SK-N-SH (cell line): ENCODE measurements at regions of chr10 and their contacts with region 1.

Region 1: DNA sequence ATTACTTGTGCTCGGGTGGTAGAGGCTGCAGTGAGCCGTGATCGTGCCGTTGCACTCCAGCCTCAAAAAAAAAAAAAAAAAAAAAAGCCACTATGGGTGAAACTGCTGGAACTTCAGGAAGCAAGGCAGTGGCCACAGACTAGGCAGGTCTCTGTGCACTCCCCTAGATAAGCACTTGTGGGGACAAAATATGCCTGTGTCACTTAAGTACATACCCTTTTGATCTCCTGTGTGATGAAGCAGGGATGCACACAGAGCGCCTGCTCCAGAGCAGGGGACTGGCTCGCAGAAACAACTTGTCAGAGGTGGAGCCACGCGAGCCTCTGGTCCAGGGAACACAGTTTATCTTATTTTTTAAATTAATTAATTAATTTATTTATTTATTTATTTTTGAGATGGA is 42.9 kb upstream of the PSAP start:
- DNase-seq: no peak
- H3K4me3 ChIP-seq: no peak overlapping the region
- H3K27ac ChIP-seq: no peak overlapping the region
- H3K4me1 ChIP-seq: peaks cover 0 to 3% of the 10 kb centered on the region in 2 experiments; a peak in 1 of 4 replicates
- H3K27me3 ChIP-seq: no peaks in the 10 kb centered on the region
- CTCF ChIP-seq: no peak
- EP300 ChIP-seq: no peak
- RAD21 ChIP-seq: no peak

Region 2: GRCh38 chr10:71323407-71323806 is 570.5 kb before region 1 on chr10:
- CTCF ChIA-PET with region 1: no interaction called
- POLR2A ChIA-PET with region 1: no interaction called
- DNase-seq: peak; percentile 54
- H3K4me3 ChIP-seq: no peak overlapping the region
- H3K27ac ChIP-seq: no peak overlapping the region
- H3K4me1 ChIP-seq: peaks cover 0 to 13% of the 10 kb centered on the region in 2 experiments; a peak in 1 of 4 replicates
- H3K27me3 ChIP-seq: no peaks in the 10 kb centered on the region
- CTCF ChIP-seq: no peak
- EP300 ChIP-seq: no peak
- RAD21 ChIP-seq: no peak

Region 3: DNA sequence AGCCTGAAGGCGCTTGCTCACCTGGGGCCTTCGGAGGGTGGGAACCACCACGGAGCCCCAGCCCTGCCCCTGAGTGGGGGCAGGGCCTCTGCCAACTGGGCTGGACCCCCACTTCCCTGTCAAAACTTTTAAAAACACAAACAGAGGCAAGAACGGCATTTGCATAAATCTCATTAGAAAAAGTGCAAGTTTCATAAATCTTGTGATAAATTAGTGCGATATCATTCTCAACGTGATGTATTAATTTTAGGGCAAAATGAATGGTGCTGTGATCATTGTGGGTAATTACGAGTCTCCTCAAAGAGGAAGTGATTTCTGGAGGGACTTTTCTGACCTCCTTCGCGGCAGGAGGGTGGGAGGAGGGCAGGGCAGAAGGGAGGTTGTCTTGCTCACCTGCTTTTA is 398.9 kb before region 1 on chr10:
- CTCF ChIA-PET with region 1: no interaction called
- POLR2A ChIA-PET with region 1: no interaction called
- DNase-seq: no peak
- H3K4me3 ChIP-seq: no peak overlapping the region
- H3K27ac ChIP-seq: no peak overlapping the region
- H3K4me1 ChIP-seq: peaks cover 0 to 13% of the 10 kb centered on the region in 2 experiments; a peak in 2 of 4 replicates
- H3K27me3 ChIP-seq: no peaks in the 10 kb centered on the region; the same call in none of the 2 replicates
- CTCF ChIP-seq: no peak
- EP300 ChIP-seq: no peak
- RAD21 ChIP-seq: no peak

Region 4: DNA sequence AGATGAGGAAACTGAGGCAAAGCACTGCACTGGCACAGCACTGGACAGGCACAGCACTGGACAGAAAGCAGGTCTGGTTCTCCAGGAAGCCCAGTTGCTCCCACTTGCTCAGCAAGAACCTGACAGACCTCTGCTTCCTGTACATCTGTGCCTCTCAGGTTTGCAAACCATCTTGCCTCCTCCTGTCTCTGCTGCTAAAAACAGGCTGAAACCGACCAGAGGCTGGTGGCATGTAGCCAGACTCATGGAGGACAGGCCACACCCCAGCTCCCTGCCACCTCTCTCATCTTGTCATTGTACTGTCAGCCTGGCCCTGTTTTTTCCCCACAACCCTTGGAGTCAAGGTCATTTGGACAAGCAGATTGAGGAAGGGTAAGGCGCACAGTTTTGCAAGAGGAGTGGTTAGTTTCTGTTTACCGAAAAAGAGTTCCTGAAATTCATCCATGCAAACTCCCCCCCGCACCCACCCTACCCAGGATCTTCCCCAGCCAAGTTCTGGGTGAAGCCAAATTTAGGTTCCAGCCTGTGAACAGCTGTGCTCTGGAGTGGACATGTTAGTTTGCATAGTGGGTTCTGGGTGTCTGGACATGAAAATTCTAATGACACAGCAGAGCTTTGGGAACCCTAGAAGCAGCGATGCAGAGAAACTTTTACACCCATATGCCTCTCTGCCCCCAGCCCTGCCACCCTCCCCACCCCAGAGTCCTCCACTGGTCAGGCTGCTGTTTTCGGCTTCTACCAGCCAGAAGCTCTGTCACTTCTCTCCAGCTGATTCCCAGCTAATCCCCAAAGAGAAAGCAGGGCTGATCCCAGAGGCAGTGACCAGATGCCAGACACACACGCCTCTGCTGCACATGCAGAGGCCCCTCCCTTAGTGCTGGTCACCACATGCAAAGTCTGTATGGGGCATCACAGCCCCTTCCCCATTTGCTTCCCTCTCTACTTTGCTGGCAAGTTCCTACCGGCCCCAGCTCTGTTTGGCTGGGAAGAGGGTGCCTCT is 165.9 kb before region 1 on chr10:
- CTCF ChIA-PET with region 1: interaction called, 31 read pairs
- POLR2A ChIA-PET with region 1: no interaction called
- DNase-seq: peak; percentile 87
- H3K4me3 ChIP-seq: no peak overlapping the region
- H3K27ac ChIP-seq: peak overlapping the region in 1 of 2 experiments; percentile 91; a peak in 2 of 4 replicates
- H3K4me1 ChIP-seq: peaks cover 0 to 46% of the 10 kb centered on the region in 2 experiments; a peak in 1 of 4 replicates
- H3K27me3 ChIP-seq: no peaks in the 10 kb centered on the region; the same call in 1 of the 2 replicates
- CTCF ChIP-seq: no peak
- EP300 ChIP-seq: peak in 1 of 2 experiments; percentile 39; a peak in 1 of 4 replicates
- RAD21 ChIP-seq: no peak

Region 5: DNA sequence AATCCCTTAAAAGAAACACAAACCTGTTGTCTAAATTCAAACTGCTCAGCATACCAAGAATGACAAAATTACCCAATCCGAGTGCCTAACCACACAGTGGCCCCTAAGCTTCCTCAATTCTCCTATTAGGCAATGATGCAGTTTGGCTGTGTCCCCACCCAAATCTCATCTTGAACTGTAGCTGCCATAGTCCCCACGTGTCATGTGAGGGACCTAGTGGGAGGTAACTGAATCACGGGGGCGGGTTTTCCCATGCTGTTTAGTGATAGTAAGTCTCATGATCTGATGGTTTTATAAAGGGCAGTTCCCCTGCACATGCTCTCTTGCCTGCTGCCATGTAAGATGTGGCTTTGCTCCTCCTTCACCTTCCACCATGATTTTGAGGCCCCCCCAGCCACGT is 64.7 kb before region 1 on chr10:
- CTCF ChIA-PET with region 1: interaction called, 65 read pairs
- POLR2A ChIA-PET with region 1: no interaction called
- DNase-seq: no peak
- H3K4me3 ChIP-seq: no peak overlapping the region
- H3K27ac ChIP-seq: no peak overlapping the region
- H3K4me1 ChIP-seq: no peaks in the 10 kb centered on the region; a peak in 1 of 4 replicates
- H3K27me3 ChIP-seq: no peaks in the 10 kb centered on the region
- CTCF ChIP-seq: no peak
- EP300 ChIP-seq: no peak
- RAD21 ChIP-seq: no peak

Region 6: GRCh38 chr10:71880425-71881306 is 13.3 kb before region 1 on chr10:
- CTCF ChIA-PET with region 1: interaction called, 32 read pairs
- POLR2A ChIA-PET with region 1: no interaction called
- DNase-seq: peak; percentile 83
- H3K4me3 ChIP-seq: no peak overlapping the region; a peak in 1 of 4 replicates
- H3K27ac ChIP-seq: peak overlapping the region in 1 of 2 experiments; percentile 93; a peak in 2 of 4 replicates
- H3K4me1 ChIP-seq: peaks cover 0 to 24% of the 10 kb centered on the region in 2 experiments; a peak in 2 of 4 replicates
- H3K27me3 ChIP-seq: no peaks in the 10 kb centered on the region
- CTCF ChIP-seq: no peak
- EP300 ChIP-seq: peak in 1 of 2 experiments; percentile 88; a peak in 2 of 4 replicates
- RAD21 ChIP-seq: no peak

Region 7: DNA sequence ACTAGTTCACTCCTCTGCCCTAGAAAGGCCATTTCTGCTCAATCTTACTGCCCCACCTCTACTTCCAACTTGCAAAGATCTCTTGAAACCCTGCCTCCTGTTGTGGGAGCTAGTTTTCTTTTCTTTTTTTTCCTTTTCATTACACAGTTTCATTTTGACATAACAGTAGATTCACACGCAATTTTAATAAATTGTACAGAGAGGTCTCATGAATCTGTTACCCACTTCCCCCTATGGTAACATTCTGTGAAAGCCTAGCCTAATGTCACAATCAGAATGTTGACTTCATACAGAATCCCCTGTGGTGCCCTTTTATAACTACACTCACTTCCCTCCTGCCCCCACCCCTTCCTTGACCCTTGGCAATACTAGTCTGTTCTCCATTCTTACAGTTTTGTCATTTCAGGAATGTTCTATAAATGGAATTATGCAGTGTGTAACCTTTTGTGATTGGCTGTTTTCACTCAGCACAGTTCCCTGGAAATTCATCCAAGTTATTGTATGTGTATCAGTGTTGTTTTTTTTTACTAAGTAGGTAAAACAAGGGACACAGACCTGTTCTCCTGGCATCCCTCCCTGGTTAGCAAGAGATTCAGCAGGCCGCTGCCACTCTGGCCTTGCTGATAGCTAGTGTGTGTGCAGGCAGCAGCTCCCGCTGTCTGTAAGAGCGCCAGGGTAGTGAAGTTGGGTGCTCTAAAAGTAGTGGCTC is 91.8 kb after region 1 on chr10:
- CTCF ChIA-PET with region 1: interaction called, 10 read pairs
- POLR2A ChIA-PET with region 1: no interaction called
- DNase-seq: no peak
- H3K4me3 ChIP-seq: no peak overlapping the region
- H3K27ac ChIP-seq: peak overlapping the region; percentile 25 to 70; a peak in 3 of 4 replicates
- H3K4me1 ChIP-seq: peaks cover 11 to 39% of the 10 kb centered on the region in 2 experiments; a peak in 2 of 4 replicates
- H3K27me3 ChIP-seq: no peaks in the 10 kb centered on the region
- CTCF ChIP-seq: no peak
- EP300 ChIP-seq: no peak
- RAD21 ChIP-seq: no peak

Region 8: GRCh38 chr10:72061491-72061890 is 167.6 kb after region 1 on chr10:
- CTCF ChIA-PET with region 1: interaction called, 12 read pairs
- POLR2A ChIA-PET with region 1: no interaction called
- DNase-seq: peak; percentile 56
- H3K4me3 ChIP-seq: no peak overlapping the region
- H3K27ac ChIP-seq: no peak overlapping the region
- H3K4me1 ChIP-seq: peaks cover 0 to 4% of the 10 kb centered on the region in 2 experiments; a peak in 1 of 4 replicates
- H3K27me3 ChIP-seq: no peaks in the 10 kb centered on the region
- CTCF ChIP-seq: no peak; the same call in 1 of the 2 replicates
- EP300 ChIP-seq: no peak
- RAD21 ChIP-seq: no peak